Calu3 (cell line): ENCODE measurements at regions of chr16 and their contacts with region 1.

Region 1: DNA sequence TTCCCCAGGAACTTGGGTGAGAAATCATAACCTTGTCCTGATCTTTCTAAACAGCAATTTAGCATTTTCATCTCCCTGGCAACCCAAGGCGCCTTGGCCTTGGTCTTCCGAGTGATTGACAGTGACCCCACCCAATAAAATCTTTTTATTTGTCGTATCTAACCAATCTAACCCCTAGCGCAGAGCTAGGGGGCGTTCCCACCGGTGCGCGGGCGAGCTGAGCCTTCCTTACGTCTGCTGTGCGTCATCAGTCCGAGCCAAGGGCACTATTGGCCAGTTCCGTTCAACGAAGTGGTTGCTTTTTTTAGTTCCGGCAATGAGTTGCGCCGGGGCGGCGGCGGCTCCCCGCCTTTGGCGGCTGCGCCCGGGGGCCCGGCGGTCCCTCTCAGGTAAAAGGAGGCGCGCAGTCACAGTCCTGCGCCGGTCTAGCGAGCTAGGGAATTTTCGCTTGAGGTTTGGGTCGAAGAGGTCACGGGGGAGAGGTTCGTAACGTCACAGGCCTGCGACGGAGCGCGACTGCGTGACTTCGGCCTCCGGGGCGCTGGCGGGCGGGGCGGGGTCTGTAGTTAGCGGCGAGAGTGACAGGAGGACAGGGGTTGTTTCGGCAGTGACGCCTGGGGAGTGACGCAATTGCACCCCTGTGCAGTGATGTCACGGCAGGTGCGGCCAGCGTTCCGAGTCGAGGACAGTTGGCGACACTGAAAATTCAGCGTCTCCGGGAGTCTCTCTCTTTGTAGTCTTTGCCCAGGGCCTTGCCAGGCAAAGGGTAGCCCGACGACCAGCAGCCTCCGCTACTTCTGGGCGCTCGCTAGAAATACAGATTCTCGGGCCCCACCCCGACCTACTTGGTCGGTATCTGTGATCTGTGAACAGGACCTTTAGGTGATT is at the start of gene COQ7:
- DNase-seq: peak; percentile 99
- H3K4me3 Mint-ChIP-seq: peak within 1 kb of the TSS; percentile 93
- H3K27ac Mint-ChIP-seq: peak within 1 kb of the TSS; percentile 100
- H3K4me1 Mint-ChIP-seq: peaks cover 18% of the 10 kb centered on the region
- H3K27me3 Mint-ChIP-seq: no peaks in the 10 kb centered on the region
- CTCF ChIP-seq: no peak
- total RNA-seq, gene COQ7: 24.3 and 28.5 TPM in 2 replicates

Region 2: DNA sequence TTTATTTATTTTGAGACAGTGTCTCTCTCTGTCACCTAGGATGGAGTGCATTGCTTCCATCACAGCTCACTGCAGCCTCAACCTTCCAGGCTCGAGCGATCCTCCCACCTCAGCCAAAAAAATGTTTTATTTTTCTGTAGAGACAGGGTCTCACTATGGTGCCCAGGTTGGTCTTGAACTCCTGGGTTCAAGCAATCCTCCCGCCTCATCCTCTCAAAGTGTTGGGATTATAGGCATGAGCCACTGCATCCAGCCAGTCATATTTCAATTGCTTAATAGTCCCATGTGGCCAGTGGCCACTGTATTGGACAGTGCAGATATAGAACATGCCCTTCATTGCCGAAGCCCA is 68.6 kb before region 1 on chr16:
- CTCF ChIA-PET with region 1: interaction called, 4 read pairs
- intact Hi-C with region 1: loop called (anchors 5 kb)
- DNase-seq: no peak
- H3K4me3 Mint-ChIP-seq: no peak overlapping the region
- H3K27ac Mint-ChIP-seq: peak overlapping the region; percentile 77
- H3K4me1 Mint-ChIP-seq: peaks cover 26% of the 10 kb centered on the region
- H3K27me3 Mint-ChIP-seq: no peaks in the 10 kb centered on the region
- CTCF ChIP-seq: no peak